H1 (cell line): ENCODE measurements at regions of chr2 and their contacts with region 1.

Region 1: GRCh38 chr2:191811807-191812602 is 34.9 kb downstream of the CAVIN2 start:
- DNase-seq: peak in 1 of 2 experiments; percentile 66
- H3K4me3 ChIP-seq: no peak overlapping the region
- H3K27ac ChIP-seq: no peak overlapping the region
- H3K4me1 ChIP-seq: no peaks in the 10 kb centered on the region
- H3K27me3 ChIP-seq: no peaks in the 10 kb centered on the region
- CTCF ChIP-seq: peak; percentile 40 to 84 (median 78)
- EP300 ChIP-seq: no peak
- POLR2A ChIP-seq: no peak
- RAD21 ChIP-seq: peak; percentile 94

Region 2: GRCh38 chr2:191836853-191837769 is 25.1 kb after region 1 on chr2:
- CTCF ChIA-PET with region 1: interaction called, 37 read pairs
- POLR2A ChIA-PET with region 1: no interaction called
- DNase-seq: no peak
- H3K4me3 ChIP-seq: no peak overlapping the region
- H3K27ac ChIP-seq: no peak overlapping the region
- H3K4me1 ChIP-seq: peaks cover 0 to 3% (median 0%) of the 10 kb centered on the region in 4 experiments; a peak in 1 of 7 replicates
- H3K27me3 ChIP-seq: no peaks in the 10 kb centered on the region
- CTCF ChIP-seq: no peak
- EP300 ChIP-seq: no peak
- POLR2A ChIP-seq: no peak
- RAD21 ChIP-seq: no peak

Region 3: DNA sequence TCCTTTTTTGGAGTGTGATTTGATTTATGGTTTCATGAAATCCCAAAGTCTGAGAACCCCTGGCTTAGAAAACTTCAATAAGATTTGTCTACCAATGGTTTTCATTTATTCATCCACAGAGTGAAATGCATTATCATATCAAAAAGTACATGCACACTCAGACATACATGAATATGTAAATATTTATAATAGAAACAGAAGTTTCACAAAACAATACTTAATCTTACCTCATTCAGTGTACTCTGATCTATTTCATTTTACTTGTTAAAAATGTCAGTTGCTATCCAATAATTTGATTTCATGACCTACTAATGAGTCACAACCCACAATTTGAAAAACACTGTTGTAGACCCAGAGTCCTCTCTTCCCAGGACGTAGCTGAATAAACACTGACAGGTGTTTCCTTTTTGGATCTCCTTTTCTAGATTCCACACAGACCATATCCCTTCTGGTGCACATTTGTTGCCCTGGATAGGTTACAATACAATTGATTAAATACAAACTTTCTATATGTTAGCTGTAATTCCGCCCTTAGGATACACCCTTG is 45.3 kb after region 1 on chr2:
- CTCF ChIA-PET with region 1: interaction called, 55 read pairs
- POLR2A ChIA-PET with region 1: no interaction called
- DNase-seq: no peak
- H3K4me3 ChIP-seq: no peak overlapping the region
- H3K27ac ChIP-seq: no peak overlapping the region
- H3K4me1 ChIP-seq: no peaks in the 10 kb centered on the region; a peak in 1 of 7 replicates
- H3K27me3 ChIP-seq: no peaks in the 10 kb centered on the region
- CTCF ChIP-seq: no peak
- EP300 ChIP-seq: no peak
- POLR2A ChIP-seq: no peak
- RAD21 ChIP-seq: no peak

Region 4: GRCh38 chr2:191894681-191895147 is 82.7 kb after region 1 on chr2:
- CTCF ChIA-PET with region 1: interaction called, 12 read pairs
- POLR2A ChIA-PET with region 1: no interaction called
- DNase-seq: no peak
- H3K4me3 ChIP-seq: no peak overlapping the region
- H3K27ac ChIP-seq: no peak overlapping the region
- H3K4me1 ChIP-seq: no peaks in the 10 kb centered on the region
- H3K27me3 ChIP-seq: no peaks in the 10 kb centered on the region
- CTCF ChIP-seq: no peak
- EP300 ChIP-seq: no peak
- POLR2A ChIP-seq: no peak
- RAD21 ChIP-seq: no peak

Region 5: GRCh38 chr2:192162392-192163042 is 350.5 kb after region 1 on chr2:
- CTCF ChIA-PET with region 1: interaction called, 59 read pairs
- POLR2A ChIA-PET with region 1: no interaction called
- DNase-seq: peak in 1 of 2 experiments; percentile 75
- H3K4me3 ChIP-seq: no peak overlapping the region
- H3K27ac ChIP-seq: no peak overlapping the region
- H3K4me1 ChIP-seq: no peaks in the 10 kb centered on the region
- H3K27me3 ChIP-seq: no peaks in the 10 kb centered on the region
- CTCF ChIP-seq: peak in 2 of 3 experiments; percentile 67 to 79; a peak in 3 of 4 replicates
- EP300 ChIP-seq: no peak
- POLR2A ChIP-seq: no peak
- RAD21 ChIP-seq: peak; percentile 92 to 94

Region 6: DNA sequence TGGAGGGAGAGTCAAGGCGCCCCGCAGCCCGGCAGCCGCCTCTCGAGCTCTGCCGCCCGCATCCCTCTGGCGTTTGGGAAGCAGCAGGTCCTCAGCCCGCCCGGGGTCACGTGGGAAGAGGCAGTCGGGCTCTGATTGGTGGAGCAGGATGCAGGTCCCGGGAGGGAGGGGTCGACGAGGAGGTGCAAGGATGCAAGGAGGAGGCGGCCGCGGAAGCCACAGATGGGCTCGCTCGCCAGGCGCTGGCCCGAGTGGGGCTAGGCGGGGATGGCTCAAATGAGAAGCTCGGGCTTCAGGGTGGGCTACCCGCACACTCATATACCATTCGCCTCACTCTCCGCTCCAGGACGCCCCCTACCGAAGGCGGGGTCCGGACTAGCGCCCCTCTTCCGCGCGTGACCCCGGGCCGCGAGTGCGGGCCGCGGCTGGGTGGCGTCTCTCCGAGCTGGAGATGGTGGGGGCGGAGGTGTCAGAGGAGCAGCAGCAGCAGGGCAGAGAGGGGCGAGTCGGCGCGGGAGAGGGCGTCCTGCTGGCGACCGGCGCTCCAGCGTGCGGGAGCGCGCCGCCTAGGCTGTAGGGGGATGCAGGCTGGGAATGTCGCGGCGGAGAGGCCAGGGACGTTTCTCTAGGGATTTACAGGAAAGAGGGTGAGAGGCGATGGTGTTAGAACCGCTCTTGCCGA is 383.0 kb after region 1 on chr2 and contains the start of gene TMEFF2:
- CTCF ChIA-PET with region 1: interaction called, 10 read pairs
- POLR2A ChIA-PET with region 1: no interaction called
- DNase-seq: peak; percentile 70 to 93
- H3K4me3 ChIP-seq: peak within 1 kb of the TSS; percentile 46 to 80 (median 68)
- H3K27ac ChIP-seq: no peak within 1 kb of the TSS
- H3K4me1 ChIP-seq: peaks cover 0 to 10% (median 5%) of the 10 kb centered on the region in 4 experiments; a peak in 5 of 7 replicates
- H3K27me3 ChIP-seq: peaks cover 18 to 53% (median 41%) of the 10 kb centered on the region in 4 experiments
- CTCF ChIP-seq: peak; percentile 12 to 41 (median 36); a peak in 3 of 4 replicates
- EP300 ChIP-seq: no peak
- POLR2A ChIP-seq: no peak
- RAD21 ChIP-seq: no peak
- total RNA-seq, gene TMEFF2: 1.5 and 3.7 TPM in 2 replicates